ENCODE measurements at regions of chr1 and their contacts with region 1.

Region 1: GRCh38 chr1:11037740-11038182 is 9.3 kb downstream of the MASP2 start:
- DNase-seq: peak; percentile 83 to 91 (median 85)
- ATAC-seq: peak; percentile 98
- H3K4me3 ChIP-seq: no peak overlapping the region
- H3K27ac ChIP-seq: no peak overlapping the region
- H3K4me1 ChIP-seq: no peaks in the 10 kb centered on the region
- H3K27me3 ChIP-seq: peaks cover 8 to 20% of the 10 kb centered on the region in 2 experiments
- CTCF ChIP-seq: peak; percentile 96 to 99 (median 99)
- EP300 ChIP-seq: no peak
- POLR2A ChIP-seq: no peak
- RAD21 ChIP-seq: peak; percentile 97 to 99

Region 2: DNA sequence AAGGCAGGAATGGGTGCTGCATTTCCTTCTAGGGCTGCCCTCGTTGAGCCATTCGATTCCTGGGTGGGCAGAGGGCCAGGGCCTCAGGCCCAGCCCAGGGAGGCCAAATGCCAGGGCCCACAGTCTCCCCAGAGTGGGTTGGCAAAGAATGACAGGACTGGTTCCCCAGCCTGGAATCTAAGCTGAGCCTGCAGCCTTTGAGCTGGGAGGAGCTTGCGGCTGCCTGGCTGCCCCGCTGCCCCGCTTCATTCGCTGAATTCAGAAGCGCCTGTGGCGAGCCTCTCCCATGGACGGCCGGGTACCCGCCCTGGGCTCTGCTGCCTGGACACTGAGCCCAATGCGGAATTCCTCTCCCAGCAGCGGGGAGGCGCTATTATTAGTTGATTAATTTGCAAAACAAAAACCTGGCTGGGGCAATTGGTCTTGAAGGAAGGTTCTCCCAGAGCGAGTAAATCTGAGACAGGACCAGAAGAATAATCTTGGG is 57.6 kb before region 1 on chr1:
- CTCF ChIA-PET with region 1: no interaction called
- POLR2A ChIA-PET with region 1: no interaction called
- in situ Hi-C with region 1: no loop called
- intact Hi-C with region 1: no loop called
- DNase-seq: no peak
- ATAC-seq: peak; percentile 68
- H3K4me3 ChIP-seq: no peak overlapping the region
- H3K27ac ChIP-seq: no peak overlapping the region
- H3K4me1 ChIP-seq: peaks cover 0 to 4% of the 10 kb centered on the region in 2 experiments; a peak in 1 of 5 replicates
- H3K27me3 ChIP-seq: peaks cover 63 to 86% of the 10 kb centered on the region in 2 experiments
- CTCF ChIP-seq: peak; percentile 25 to 38 (median 34); a peak in 2 of 6 replicates
- EP300 ChIP-seq: no peak
- POLR2A ChIP-seq: no peak
- RAD21 ChIP-seq: no peak

Region 3: DNA sequence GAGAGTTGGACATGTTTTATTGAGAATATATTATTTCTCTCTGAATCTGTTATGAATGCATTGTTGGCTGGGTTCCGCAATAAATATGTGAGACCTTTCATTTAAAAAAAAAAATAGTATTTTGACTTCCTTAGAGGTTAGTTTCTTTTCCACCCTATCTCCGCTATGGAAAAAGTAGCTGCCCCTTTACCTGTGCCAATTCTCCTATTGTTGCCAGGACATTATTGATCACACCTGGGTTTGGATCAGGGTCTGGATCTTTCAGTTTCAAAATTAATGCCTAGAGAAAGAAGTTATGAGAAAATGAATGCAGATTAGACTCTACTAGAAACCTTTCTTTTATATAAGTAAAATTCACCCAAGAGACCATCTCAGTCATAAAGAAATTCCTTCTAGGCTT is 195.4 kb after region 1 on chr1:
- CTCF ChIA-PET with region 1: no interaction called
- POLR2A ChIA-PET with region 1: no interaction called
- in situ Hi-C with region 1: no loop called
- intact Hi-C with region 1: loop called (anchors 5 kb)
- DNase-seq: no peak
- ATAC-seq: no peak
- H3K4me3 ChIP-seq: no peak overlapping the region
- H3K27ac ChIP-seq: no peak overlapping the region
- H3K4me1 ChIP-seq: no peaks in the 10 kb centered on the region
- H3K27me3 ChIP-seq: no peaks in the 10 kb centered on the region
- CTCF ChIP-seq: no peak
- EP300 ChIP-seq: no peak
- POLR2A ChIP-seq: no peak
- RAD21 ChIP-seq: no peak

Region 4: GRCh38 chr1:11337580-11338073 is 299.9 kb after region 1 on chr1:
- CTCF ChIA-PET with region 1: no interaction called
- POLR2A ChIA-PET with region 1: no interaction called
- in situ Hi-C with region 1: no loop called
- intact Hi-C with region 1: loop called (anchors 10 kb)
- DNase-seq: peak; percentile 78 to 93 (median 88)
- ATAC-seq: peak; percentile 93
- H3K4me3 ChIP-seq: no peak overlapping the region
- H3K27ac ChIP-seq: no peak overlapping the region
- H3K4me1 ChIP-seq: peaks cover 0 to 3% of the 10 kb centered on the region in 2 experiments; a peak in 1 of 5 replicates
- H3K27me3 ChIP-seq: peaks cover 42 to 82% of the 10 kb centered on the region in 2 experiments
- CTCF ChIP-seq: peak; percentile 89 to 98 (median 93)
- EP300 ChIP-seq: no peak
- POLR2A ChIP-seq: no peak
- RAD21 ChIP-seq: peak; percentile 39 to 71

Region 5: GRCh38 chr1:11364170-11364569 is 326.4 kb after region 1 on chr1:
- CTCF ChIA-PET with region 1: no interaction called
- POLR2A ChIA-PET with region 1: no interaction called
- in situ Hi-C with region 1: no loop called
- intact Hi-C with region 1: loop called (anchors 5 kb)
- DNase-seq: peak; percentile 65 to 72 (median 67)
- ATAC-seq: peak; percentile 88
- H3K4me3 ChIP-seq: no peak overlapping the region
- H3K27ac ChIP-seq: no peak overlapping the region
- H3K4me1 ChIP-seq: peaks cover 0 to 3% of the 10 kb centered on the region in 2 experiments; a peak in 1 of 5 replicates
- H3K27me3 ChIP-seq: peaks cover 16 to 53% of the 10 kb centered on the region in 2 experiments
- CTCF ChIP-seq: peak; percentile 74 to 81 (median 80)
- EP300 ChIP-seq: no peak
- POLR2A ChIP-seq: no peak
- RAD21 ChIP-seq: peak; percentile 37 to 81

Measured in K562 (cell line).